ENCODE measurements at regions of chr14 and their contacts with region 1.

Region 1: DNA sequence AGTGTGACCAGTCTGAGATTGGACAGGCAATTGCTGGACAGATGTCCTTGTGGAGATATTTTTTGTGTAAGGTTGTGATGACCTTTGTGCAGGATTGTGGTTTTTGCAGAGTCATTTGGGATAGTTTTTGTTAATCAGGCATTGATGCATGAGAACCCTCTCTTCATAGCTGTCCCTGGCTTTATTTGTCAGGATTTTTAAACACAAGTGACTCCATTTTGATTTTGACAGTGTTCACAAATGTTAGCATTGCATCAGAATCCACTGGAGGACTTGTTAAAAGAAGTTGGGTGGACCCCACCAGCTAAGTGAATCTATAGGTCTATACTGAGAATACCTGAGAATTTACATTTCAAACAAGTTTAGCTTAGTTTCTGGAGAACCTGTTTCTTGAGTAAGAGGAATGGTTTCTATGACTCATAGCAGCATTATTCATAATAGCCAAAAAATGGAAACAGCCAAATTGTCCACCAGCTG is 11.8 kb downstream of the FNTB start:
- DNase-seq: peak; percentile 91
- ATAC-seq: peak; percentile 77
- H3K4me3 ChIP-seq: peak overlapping the region; percentile 27; the same call in 1 of the 2 replicates
- H3K27ac ChIP-seq: peak overlapping the region; percentile 87
- H3K4me1 ChIP-seq: peaks cover 43% of the 10 kb centered on the region
- H3K27me3 ChIP-seq: no peaks in the 10 kb centered on the region
- CTCF ChIP-seq: no peak

Region 2: DNA sequence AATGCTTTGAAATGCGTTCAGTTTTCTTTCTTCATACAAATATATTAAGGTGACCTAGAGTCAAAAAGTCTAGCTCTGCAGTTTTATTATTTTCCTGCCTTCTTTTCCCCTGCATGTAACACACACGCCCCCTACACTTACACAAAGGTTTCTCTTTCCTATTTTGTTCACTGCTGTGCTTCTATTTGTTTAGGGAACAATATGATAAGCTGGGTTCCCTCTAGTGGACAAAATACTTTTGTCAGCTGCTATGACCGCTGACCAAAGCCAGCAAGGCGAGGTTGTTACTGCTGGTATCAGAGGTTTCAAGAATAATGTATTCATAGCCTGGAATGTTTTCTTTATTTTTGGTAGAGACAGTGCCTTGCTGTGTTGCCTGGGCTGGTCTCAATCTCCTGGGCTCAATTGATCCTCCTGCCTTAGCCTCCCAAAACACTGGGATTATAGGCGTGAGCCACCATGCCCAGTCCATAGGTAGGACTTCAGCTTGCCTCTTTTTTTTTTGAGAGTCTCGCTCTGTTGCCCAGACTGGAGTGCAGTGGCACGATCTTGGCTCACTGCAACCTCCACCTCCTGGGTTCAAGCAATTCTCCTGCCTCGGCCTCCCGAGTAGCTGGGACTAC is 21.6 kb after region 1 on chr14:
- CTCF ChIA-PET with region 1: interaction called, 24 read pairs
- POLR2A ChIA-PET with region 1: interaction called, 5 read pairs
- intact Hi-C with region 1: no loop called
- DNase-seq: peak; percentile 89
- ATAC-seq: peak; percentile 98
- H3K4me3 ChIP-seq: no peak overlapping the region
- H3K27ac ChIP-seq: no peak overlapping the region
- H3K4me1 ChIP-seq: no peaks in the 10 kb centered on the region; the same call in 1 of the 2 replicates
- H3K27me3 ChIP-seq: no peaks in the 10 kb centered on the region
- CTCF ChIP-seq: peak; percentile 96

Measured in PC-3 (cell line).